ENCODE measurements at regions of chr2 and their contacts with region 1.

Region 1: DNA sequence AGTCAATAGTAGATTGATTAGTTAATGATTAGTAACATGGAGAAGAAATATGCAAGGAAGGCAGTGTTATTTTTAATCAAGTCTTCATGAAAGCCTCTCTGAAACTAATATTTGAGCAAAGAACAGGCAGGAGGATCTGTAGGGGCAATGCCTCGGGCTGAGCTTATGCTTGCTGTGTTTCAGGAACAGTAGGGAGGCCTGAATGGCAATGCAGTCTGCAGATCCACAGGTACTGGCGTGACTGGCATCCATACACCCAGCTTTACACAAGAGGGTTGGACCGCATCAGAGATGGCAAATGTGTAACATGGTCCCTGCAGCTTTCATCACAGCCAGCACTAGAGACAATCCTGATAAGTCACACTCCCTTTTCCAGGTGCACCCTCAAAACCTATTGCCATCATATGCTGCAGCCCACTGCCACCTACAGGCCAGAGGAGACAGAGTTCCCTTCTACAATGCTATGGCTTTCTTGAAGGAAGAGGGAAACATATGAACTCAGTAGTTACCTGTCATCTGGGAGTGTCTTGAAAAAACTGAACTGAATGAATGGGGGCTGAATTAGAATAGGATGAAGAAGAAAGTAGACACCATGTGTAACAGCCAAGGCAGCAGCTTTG is 582.4 kb upstream of the RAB6C start:
- DNase-seq: peak; percentile 30
- ATAC-seq: peak in 1 of 2 donors; percentile 68

Region 2: GRCh38 chr2:128736689-128737545 is 660.2 kb before region 1 on chr2:
- intact Hi-C with region 1: loop called in 1 of 2 experiments (anchors 10 kb)
- DNase-seq: peak; percentile 78
- ATAC-seq: peak; percentile 80 to 87

Region 3: DNA sequence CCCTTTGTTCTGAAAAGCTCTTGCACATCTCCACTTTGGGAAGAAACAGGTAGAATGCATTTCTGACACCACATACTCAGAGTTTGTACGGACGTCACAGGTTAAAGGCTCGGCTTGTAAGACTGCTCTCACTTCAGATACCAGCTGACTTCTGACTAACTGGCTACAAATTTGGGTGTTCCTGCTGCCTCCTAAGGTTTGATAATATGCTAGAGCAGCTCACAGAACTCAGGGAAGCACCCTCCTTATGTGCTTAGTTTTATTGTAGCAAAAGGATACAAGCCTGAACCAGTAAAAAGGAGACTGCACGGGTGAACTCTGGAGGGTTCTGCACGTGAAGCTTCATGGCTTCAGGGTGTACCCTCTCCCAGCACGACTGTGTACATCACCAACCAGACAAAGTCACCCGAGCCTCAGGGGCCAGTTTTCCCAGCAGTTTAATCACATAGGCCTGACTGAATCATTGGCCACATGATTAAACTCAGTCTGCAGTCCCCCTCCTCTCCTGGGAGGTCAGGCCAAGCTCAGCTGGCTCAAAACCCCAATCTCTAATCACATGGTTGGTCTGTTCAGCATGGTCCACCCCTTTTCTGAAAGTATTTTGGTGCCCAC is 167.2 kb before region 1 on chr2:
- intact Hi-C with region 1: no loop called
- DNase-seq: no peak
- ATAC-seq: no peak

Region 4: GRCh38 chr2:129253461-129253812 is 143.7 kb before region 1 on chr2:
- intact Hi-C with region 1: loop called in 1 of 2 experiments (anchors 5 kb)
- DNase-seq: peak; percentile 27
- ATAC-seq: peak in 1 of 2 donors; percentile 71